ENCODE measurements at regions of chr14 and their contacts with region 1.

Region 1: DNA sequence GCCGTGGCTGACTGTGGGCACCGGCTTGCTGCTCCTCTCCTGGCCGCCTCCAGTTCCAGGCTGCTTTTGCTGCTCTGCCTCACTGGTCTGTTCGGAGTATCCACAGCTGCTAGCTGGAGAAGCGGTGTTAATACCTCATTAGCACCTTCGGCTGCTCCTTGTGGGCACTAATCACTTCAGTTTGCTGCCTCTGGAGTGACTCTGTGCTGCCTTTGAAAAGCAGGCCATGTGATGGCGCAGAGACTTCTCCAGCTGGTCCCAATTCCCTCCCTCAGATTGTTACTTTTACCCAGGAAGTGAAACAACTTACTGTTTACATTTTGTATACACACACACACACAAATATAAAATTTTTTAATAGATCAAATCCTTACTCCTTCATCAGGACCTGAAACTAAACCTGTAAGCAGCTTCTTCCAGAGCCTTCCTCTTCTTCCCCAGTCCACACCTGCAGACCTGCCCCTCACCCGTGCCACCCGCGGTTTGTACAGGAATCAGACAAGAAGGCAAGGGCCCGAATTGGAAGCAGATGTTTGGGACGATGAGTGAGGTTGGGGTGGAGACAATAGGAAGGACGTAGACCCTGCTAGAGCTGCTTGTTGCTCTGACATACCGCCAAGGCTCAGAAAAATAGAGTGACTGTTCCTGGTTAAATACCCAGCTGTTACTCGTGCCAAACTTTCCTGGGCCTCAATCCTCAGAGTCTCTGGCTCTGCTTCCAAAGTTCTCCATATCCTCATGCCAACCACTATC is 41.5 kb upstream of the LTBP2 start:
- DNase-seq: no peak
- ATAC-seq: no peak
- H3K4me3 ChIP-seq: no peak overlapping the region
- H3K27ac ChIP-seq: peak overlapping the region in 1 of 2 donors; percentile 61
- H3K4me1 ChIP-seq: peaks cover 5 to 10% of the 10 kb centered on the region in 2 donors
- H3K27me3 ChIP-seq: no peaks in the 10 kb centered on the region

Region 2: DNA sequence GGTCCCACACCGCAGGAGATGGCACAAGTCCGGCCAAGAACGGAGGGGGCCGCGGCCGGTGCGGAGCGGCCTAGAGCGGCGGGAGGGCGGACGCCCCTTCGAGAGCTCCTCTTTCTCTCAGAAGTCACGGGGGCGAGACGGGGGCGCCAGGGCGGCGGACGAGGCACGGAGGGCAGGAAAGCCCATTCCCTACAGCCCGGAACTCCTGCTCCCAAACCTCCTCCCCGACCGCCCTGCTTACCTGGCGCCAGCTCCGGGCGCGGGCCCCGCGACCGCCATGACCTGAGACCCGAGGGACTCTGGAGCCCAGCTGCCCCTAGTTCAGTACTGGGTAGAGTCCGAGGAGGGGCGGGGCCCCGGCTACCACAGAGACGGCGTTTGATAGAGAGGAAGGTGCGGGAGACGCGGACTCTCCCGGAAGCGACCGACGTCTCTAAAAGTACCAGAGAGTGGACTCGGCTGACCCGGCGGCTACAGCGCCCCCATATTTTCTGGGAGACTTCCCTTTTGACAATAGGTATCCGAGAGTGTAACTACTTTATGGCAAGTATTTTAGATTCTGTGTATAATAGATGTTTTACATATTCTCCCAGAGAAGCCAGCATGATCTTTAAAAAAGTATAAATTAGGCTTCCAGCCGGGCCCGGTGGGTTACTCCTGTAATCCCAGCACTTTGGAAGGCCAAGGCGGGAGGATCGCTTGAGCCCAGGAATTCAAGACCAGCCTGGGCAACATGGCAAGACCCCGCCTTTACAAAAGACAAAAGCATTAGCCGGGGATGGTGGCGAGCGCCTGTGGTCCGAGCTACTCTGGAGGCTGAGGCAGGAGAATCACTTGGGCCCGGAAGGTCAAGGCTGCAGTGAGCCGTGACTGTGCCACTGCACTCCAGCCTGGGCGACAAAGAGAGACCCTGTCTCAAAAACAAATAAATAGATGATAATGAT is 350.7 kb before region 1 on chr14 and contains the start of gene ABCD4:
- intact Hi-C with region 1: no loop called
- DNase-seq: peak; percentile 96 to 98
- ATAC-seq: peak; percentile 97
- H3K4me3 ChIP-seq: peak within 1 kb of the TSS; percentile 68 to 75
- H3K27ac ChIP-seq: peak within 1 kb of the TSS; percentile 46 to 48
- H3K4me1 ChIP-seq: no peaks in the 10 kb centered on the region
- H3K27me3 ChIP-seq: no peaks in the 10 kb centered on the region
- total RNA-seq, gene ABCD4: 40.3 to 102 TPM

Region 3: GRCh38 chr14:74618078-74618952 is 35.2 kb before region 1 on chr14:
- intact Hi-C with region 1: loop called in 1 of 2 experiments (anchors 5 kb)
- DNase-seq: peak in 1 of 2 donors; percentile 66
- ATAC-seq: no peak
- H3K4me3 ChIP-seq: no peak overlapping the region
- H3K27ac ChIP-seq: peak overlapping the region; percentile 68 to 99
- H3K4me1 ChIP-seq: peaks cover 10 to 17% of the 10 kb centered on the region in 2 donors
- H3K27me3 ChIP-seq: no peaks in the 10 kb centered on the region

Measured in aorta (tissue), 5 donors.